Heart right ventricle (tissue), 16 donors: ENCODE measurements at regions of chr4 and their contacts with region 1.

Region 1: GRCh38 chr4:9762823-9763475 is 18.5 kb upstream of the DRD5 start:
- DNase-seq: peak in 1 of 2 donors; percentile 70
- ATAC-seq: no peak
- H3K4me3 ChIP-seq: no peak overlapping the region
- H3K27ac ChIP-seq: no peak overlapping the region
- H3K4me1 ChIP-seq: no peaks in the 10 kb centered on the region
- H3K27me3 ChIP-seq: peaks cover 0 to 17% (median 13%) of the 10 kb centered on the region in 7 donors
- CTCF ChIP-seq: peak; percentile 30 to 82 (median 70)

Region 2: DNA sequence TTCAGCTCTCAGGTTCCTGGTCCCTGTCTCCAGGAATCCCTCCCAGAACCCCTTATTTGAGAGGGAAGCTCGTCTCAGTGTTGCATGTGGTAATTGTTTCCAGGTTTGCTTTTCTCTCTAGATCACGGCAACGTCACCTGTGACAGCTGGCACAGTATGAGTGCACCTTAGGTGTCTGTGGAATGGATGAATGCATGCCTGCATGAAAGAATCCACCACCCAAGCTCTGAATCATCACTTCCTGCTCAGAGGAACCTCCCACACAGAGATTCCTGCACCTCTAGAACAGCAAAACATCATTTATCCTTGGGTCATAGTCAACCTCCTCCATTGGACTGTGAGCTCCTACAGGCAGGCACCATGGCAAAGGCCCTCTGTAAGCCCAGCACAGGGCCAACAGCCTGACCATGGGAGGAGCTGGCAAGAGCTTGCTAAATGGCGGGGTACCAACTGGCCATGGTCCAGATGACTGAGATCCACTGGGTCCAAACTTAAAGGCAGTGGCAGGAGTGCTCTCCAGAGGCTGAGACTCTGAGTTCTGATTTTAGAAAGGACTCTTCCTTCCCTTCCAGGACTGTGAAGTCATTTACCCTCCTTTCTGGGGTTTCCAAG is 142.1 kb after region 1 on chr4:
- intact Hi-C with region 1: loop called in 3 of 10 experiments (anchors 1 to 10 kb)
- DNase-seq: peak; percentile 22 to 44
- ATAC-seq: peak in 5 of 8 donors; percentile 24 to 69 (median 51)
- H3K4me3 ChIP-seq: no peak overlapping the region
- H3K27ac ChIP-seq: no peak overlapping the region
- H3K4me1 ChIP-seq: peaks cover 0 to 10% (median 4%) of the 10 kb centered on the region in 9 donors
- H3K27me3 ChIP-seq: no peaks in the 10 kb centered on the region
- CTCF ChIP-seq: no peak

Region 3: DNA sequence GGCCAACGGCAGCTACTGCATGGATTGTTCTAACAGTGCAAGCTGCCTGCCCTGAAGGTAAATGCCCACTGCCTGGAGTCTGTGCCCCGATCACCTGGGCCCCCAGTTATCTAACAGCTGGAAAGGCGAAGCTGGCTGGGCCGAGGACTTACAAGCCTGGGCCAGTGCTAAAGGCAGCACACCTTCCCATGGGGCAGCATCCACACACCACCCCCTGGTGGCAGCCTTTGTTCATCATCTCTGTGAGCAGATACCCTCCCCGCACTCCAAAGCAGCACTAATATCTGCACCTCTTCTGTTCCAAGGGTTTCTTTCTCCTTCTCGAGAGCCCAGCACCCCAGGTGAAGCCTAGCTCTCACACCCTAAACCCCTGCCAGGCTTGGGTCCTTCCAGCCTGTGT is 250.8 kb after region 1 on chr4:
- intact Hi-C with region 1: loop called (anchors 2 to 5 kb)
- DNase-seq: peak; percentile 37 to 47
- ATAC-seq: peak in 6 of 8 donors; percentile 43 to 75 (median 60)
- H3K4me3 ChIP-seq: no peak overlapping the region
- H3K27ac ChIP-seq: no peak overlapping the region
- H3K4me1 ChIP-seq: peaks cover 0 to 27% (median 12%) of the 10 kb centered on the region in 9 donors
- H3K27me3 ChIP-seq: no peaks in the 10 kb centered on the region
- CTCF ChIP-seq: peak; percentile 23 to 55 (median 48)

Region 4: DNA sequence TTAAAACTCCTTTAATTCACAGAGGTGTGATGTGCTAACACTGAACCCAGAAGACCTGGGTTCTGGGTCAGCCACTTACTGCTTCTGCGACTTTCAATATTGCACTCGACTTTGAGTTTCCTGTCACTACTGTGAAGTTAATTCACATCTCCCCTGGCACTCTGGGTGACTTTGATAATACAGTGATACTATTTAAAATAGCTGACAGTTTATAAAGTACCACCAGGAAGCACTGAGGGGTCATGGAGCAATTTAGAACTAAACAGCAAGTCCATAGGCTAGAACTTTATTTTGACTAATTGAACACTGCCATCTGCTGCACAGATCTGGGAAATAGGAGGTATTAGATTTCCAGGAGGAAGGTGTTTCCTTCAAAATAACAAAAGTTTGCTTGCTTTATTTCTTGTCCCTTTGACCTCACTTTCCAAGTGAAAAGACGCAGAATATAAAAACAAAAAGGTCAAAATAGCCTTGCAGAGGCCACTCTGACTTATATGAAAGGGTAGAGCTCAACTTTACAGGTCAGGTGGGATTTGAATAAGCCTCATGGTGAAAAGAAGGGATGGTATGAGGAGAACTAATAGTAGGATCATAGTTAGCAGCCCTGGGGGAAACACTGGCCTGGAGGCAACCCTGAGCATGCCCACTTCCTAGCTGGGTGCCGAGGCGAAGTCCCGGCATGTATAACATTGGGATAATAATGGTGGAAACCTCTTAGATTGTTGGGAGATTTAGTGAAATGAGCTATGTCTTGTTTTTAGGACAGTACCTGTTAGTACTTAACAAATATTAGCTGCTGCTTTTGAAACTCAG is 640.9 kb after region 1 on chr4:
- intact Hi-C with region 1: loop called in 1 of 10 experiments (anchors 5 kb)
- DNase-seq: peak in 1 of 2 donors; percentile 11
- ATAC-seq: peak in 4 of 8 donors; percentile 56 to 67 (median 63)
- H3K4me3 ChIP-seq: no peak overlapping the region
- H3K27ac ChIP-seq: no peak overlapping the region
- H3K4me1 ChIP-seq: peaks cover 0 to 10% (median 0%) of the 10 kb centered on the region in 9 donors
- H3K27me3 ChIP-seq: no peaks in the 10 kb centered on the region
- CTCF ChIP-seq: peak in 8 of 9 donors; percentile 19 to 70 (median 59)

Region 5: DNA sequence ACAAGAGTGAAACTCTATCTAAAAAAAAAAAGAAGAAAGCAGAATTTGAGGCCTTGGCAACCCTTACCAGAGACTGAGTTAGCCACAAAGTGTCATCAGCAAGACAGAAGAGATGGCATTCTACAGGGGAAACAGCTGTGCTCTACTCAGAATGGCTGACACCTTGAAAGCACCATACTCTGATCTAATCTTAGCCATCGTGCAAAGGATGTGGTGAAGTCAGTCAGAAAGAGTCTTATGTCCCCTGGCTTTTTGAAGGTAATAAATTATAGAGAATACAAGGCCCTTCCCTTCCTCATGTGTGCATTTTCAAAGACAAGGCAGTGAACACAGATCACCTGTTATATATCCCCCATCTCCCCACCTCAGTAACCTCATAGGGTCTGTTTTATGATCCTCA is 908.4 kb after region 1 on chr4:
- intact Hi-C with region 1: no loop called
- DNase-seq: no peak
- ATAC-seq: no peak
- H3K4me3 ChIP-seq: no peak overlapping the region
- H3K27ac ChIP-seq: no peak overlapping the region
- H3K4me1 ChIP-seq: no peaks in the 10 kb centered on the region
- H3K27me3 ChIP-seq: peaks cover 0 to 17% (median 7%) of the 10 kb centered on the region in 7 donors
- CTCF ChIP-seq: no peak